Heart left ventricle (tissue), 16 donors: ENCODE measurements at regions of chrX and their contacts with region 1.

Region 1: DNA sequence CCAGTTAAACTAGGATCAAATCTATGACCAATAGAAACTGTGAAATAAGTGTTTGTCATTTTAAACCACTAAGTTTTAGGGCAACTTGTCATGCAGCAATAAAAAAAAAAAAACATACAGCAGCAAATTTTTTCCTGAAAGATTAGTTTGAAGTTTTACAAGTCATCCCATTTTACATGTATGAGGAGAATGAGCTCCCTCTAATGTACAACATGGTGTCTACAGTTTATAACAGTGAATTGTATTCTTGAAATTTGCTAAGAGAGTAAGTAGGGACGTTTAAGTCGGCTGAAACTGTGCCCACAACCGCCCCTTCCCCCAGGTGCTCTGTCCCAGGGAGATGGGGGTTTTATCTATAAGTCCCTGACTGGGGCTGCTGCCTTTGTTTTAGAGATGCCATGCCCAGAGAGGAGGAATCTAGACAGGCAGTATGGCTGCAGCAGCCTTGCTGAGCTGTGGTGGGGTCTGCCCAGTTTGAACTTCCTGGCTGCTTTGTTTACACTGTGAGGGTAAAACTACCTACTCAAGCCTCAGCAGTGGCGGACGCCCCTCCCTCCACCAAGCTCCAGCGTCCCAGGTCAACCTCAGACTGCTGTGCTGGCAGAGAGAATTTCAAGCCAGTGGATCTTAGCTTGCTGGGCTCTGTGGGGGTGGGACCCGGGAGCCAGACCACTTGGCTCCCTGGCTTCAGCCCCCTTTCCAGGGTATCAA is 499.3 kb upstream of the CT83 start:
- DNase-seq: no peak
- ATAC-seq: no peak
- H3K4me3 ChIP-seq: no peak overlapping the region
- H3K27ac ChIP-seq: no peak overlapping the region
- H3K4me1 ChIP-seq: no peaks in the 10 kb centered on the region
- H3K27me3 ChIP-seq: no peaks in the 10 kb centered on the region
- CTCF ChIP-seq: peak in 4 of 12 donors; percentile 9 to 25 (median 21)
- POLR2A ChIP-seq: no peak

Region 2: DNA sequence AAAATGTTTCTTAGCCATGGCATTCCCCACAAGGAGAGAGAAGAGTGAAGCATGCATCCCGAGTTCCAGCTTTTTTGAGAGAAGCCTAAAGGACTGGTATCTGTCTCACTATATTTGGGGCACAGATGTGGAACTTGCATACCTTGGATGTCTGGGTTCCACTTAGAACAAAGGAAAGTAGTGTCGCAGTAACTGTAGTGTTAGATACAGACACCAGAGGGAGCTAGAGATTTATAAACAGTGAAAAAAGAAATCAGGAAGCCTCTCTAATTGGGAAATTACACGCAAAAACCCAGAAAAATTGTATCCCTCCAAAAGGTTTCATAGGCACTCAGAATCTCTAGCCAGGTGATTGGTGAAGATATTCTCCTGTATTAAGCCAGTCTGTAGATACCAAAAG is 757.1 kb before region 1 on chrX:
- intact Hi-C with region 1: loop called in 1 of 10 experiments (anchors 10 kb)
- DNase-seq: no peak
- ATAC-seq: no peak
- H3K4me3 ChIP-seq: no peak overlapping the region
- H3K27ac ChIP-seq: no peak overlapping the region
- H3K4me1 ChIP-seq: no peaks in the 10 kb centered on the region
- H3K27me3 ChIP-seq: peaks cover 0 to 9% (median 0%) of the 10 kb centered on the region in 9 donors
- CTCF ChIP-seq: peak; percentile 32 to 58 (median 44)
- POLR2A ChIP-seq: no peak